Mucosa of descending colon (tissue), 3 donors: ENCODE measurements at regions of chr13 and their contacts with region 1.

Region 1: GRCh38 chr13:49690992-49691886 is at the start of gene EBPL:
- DNase-seq: peak; percentile 96 to 98 (median 97)
- ATAC-seq: peak; percentile 95
- H3K4me3 ChIP-seq: peak within 1 kb of the TSS; percentile 46
- H3K4me1 ChIP-seq: peaks cover 19% of the 10 kb centered on the region
- CTCF ChIP-seq: no peak
- total RNA-seq, gene EBPL: 33.6 to 36.8 (median 34.0) TPM

Region 2: GRCh38 chr13:49792550-49793324 is 101.5 kb after region 1 on chr13 and contains the start of gene KPNA3:
- intact Hi-C with region 1: loop called in 1 of 2 experiments (anchors 10 kb)
- DNase-seq: peak; percentile 96 to 98 (median 97)
- ATAC-seq: peak; percentile 94
- H3K4me3 ChIP-seq: peak within 1 kb of the TSS; percentile 91
- H3K4me1 ChIP-seq: peaks cover 15% of the 10 kb centered on the region
- CTCF ChIP-seq: peak; percentile 43
- total RNA-seq, gene KPNA3: 20.0 to 45.6 (median 24.6) TPM